Activated CD8-positive, alpha-beta memory T cell treated with anti-CD3 and anti-CD28 coated beads, Interleukin-2, amount 10 ng/mL, durations not matched to agents 7 days and 5 days (primary cell): ENCODE measurements at regions of chr12 and their contacts with region 1.

Region 1: GRCh38 chr12:575948-576612 is 87.2 kb downstream of the NINJ2 start:
- DNase-seq: peak; percentile 85
- ATAC-seq: peak; percentile 94
- H3K4me3 Mint-ChIP-seq: no peak overlapping the region
- H3K27ac Mint-ChIP-seq: peak overlapping the region; percentile 70
- H3K4me1 Mint-ChIP-seq: peaks cover 43% of the 10 kb centered on the region
- H3K27me3 Mint-ChIP-seq: no peaks in the 10 kb centered on the region

Region 2: DNA sequence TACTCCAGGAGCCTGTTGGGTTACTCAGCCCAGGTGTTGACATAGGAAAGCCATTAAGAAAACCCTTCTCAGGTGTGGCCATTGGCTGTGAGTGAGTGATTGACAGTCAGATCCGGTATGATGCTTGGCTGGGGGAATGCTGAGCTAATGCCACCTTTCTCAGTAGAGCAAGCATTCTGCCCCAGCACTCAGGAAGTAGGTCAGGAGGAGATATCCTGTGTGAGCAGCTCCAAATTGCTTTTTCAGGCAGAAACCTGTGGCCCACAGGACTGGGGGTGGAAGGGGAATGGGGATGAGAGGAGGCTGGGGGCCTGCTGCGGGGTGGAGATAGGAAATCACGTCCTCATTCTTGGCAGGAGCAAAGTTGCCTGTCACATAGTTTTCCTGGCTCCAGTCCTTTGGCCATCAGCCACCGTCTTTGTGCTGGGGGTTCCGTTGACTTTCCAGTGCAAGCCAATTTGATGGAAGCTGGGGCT is 31.5 kb after region 1 on chr12:
- CTCF ChIA-PET with region 1: interaction called, 38 read pairs
- DNase-seq: peak; percentile 45
- ATAC-seq: no peak
- H3K4me3 Mint-ChIP-seq: no peak overlapping the region
- H3K27ac Mint-ChIP-seq: peak overlapping the region; percentile 64
- H3K4me1 Mint-ChIP-seq: peaks cover 44% of the 10 kb centered on the region
- H3K27me3 Mint-ChIP-seq: peaks cover 3% of the 10 kb centered on the region

Region 3: DNA sequence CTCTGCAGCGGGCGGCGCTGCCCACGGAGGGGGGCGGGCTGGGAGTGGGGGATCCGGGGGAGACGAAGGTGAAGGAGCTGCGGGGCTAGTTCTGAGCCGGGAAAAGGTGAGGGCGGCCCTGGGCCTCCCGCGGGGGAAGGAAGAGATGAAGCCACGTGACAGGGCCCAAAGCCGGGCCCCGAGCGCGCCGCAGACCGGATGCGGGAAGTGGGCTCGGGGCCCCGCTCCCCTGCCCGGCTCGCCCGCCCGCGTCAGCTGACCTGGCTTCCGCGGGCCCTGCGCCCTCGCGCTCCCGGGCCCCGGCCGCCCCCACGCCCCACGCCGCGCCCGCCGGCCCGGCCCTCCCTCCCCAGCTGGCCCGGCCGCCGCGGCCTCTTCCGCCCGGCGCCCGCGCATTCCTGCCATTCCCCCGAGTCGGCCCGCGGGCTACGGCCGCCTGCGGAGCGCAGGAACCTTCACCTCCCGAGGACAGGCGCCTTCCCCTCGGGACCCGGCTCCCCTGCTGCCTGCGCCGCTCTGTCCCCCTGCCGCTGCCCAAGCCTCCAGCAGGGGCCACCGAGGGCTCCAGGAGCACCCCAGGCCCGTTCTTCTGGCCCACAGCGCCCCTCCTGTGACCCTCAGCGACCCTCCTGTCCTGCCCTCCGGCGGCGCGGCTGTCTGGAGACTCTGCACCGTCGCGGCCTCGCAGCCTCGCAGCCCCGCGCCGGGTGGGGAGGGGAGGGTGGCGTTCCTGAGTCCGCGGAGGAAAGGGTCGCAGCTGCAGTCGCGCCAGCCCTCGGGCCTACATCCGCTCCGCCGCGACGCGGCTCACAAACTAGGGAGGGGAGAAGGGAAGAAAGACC is 66.8 kb after region 1 on chr12:
- CTCF ChIA-PET with region 1: interaction called, 14 read pairs
- DNase-seq: peak; percentile 86
- ATAC-seq: peak; percentile 85
- H3K4me3 Mint-ChIP-seq: peak overlapping the region; percentile 84
- H3K27ac Mint-ChIP-seq: peak overlapping the region; percentile 89
- H3K4me1 Mint-ChIP-seq: peaks cover 58% of the 10 kb centered on the region
- H3K27me3 Mint-ChIP-seq: no peaks in the 10 kb centered on the region

Region 4: DNA sequence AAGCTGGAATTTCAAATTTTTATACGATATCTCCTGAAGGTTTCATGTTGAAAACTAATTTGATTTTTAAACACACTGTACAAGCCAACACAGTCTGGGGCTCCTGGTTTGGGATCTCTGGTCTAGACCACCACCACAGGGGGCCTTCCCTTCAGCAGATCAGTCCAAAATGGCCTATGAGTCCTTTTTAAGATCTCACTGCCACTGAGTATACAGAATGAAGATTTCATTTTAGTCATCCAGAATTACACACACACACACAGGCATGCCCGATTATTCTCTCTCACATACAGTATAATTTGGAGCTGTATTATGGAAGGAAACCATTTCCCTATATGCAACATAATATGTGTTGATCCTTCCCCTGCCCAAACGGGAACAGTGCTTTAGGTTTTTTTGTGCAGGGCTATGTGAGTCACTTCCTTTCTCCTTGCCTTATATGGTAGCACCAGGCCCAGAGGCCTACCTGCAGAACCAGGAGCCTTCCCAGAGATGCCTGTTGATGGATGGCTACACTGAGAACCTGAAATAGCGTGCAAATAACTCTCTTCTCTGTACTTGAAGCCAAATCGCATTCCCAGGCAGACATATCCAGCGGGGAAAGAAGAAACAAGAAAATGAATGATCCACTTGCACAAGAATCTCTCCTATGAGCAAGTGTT is 148.2 kb after region 1 on chr12:
- CTCF ChIA-PET with region 1: interaction called, 14 read pairs
- DNase-seq: no peak
- ATAC-seq: peak; percentile 86
- H3K4me3 Mint-ChIP-seq: no peak overlapping the region
- H3K27ac Mint-ChIP-seq: peak overlapping the region; percentile 75
- H3K4me1 Mint-ChIP-seq: peaks cover 54% of the 10 kb centered on the region
- H3K27me3 Mint-ChIP-seq: no peaks in the 10 kb centered on the region

Region 5: DNA sequence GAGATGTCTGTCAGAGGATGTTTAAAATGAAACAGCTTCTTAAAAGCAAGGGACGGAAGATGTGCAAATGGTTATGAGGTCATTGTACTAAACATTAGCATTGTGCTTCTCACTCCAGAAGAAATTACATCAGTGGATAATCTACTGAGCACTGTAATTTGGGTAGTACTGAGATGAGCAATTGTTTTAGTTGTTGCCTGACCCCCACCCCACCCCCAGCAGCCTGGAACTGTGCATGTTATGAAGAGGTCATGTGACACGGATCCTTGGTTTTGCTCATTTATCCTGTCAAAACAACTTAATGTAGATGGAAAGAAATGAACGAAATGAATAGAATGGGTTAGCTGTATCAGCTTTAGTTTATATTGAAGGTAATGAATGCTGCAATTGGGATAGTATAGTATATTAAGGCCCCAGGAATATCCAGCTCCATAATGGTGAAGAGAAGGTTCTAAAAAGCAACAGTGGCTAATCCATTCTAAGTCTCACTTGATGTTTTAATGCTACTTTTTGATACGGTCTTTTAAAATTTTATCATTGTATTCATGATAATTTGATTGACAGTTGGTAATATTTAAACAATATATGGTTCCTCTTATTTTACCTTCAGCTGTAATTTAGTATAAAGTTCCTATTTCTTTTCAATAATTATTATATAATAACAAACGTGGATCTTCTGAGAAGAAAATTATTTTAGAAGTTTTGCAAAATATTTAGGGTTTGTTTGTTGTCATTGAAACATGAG is 234.8 kb after region 1 on chr12:
- CTCF ChIA-PET with region 1: interaction called, 39 read pairs
- DNase-seq: peak; percentile 75
- ATAC-seq: peak; percentile 85
- H3K4me3 Mint-ChIP-seq: peak overlapping the region; percentile 36
- H3K27ac Mint-ChIP-seq: peak overlapping the region; percentile 59
- H3K4me1 Mint-ChIP-seq: peaks cover 70% of the 10 kb centered on the region
- H3K27me3 Mint-ChIP-seq: no peaks in the 10 kb centered on the region